ENCODE measurements at regions of chr3 and their contacts with region 1.

Region 1: DNA sequence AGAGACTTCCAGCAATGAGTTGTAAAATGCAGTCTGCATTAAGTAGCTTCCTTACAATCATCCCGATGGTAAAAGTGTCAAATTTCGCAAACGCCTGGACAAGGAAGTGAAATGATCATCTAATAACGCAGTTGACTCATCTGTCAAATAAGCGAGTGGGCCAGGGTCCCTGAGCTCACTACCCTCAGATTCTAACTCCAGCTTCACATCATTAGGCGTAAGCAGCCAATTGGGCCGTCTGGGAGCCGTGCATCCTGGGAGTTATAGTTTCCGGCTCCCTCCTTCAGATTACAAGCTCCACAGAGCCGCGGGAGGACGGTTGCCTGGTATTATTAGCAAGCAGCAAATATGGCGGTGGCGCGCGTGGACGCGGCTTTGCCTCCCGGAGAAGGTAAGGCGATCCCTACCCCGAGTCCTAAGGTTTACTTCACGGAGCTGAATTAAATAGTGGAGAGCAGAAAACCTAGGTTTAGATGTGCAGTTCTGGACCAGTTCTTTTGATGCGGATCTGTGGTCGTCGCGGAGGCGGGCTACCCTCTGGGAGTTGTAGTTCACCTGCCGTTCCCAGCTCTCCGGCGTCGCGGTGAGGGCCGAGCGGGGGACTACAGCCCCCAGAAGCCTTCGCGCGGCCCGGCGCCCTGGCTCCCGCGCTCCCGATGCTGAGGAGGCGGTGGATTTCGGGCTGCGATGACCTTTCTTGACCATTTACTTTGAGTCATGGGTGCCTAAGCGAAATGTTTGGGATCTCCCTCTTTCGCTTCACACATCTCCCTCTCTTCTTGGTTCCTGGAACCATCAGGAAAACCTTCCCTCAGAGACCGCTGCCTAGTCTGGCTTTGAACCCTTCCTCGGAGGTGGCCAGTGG is at the start of gene CEP97:
- DNase-seq: peak; percentile 70 to 90 (median 88)
- ATAC-seq: peak; percentile 98
- H3K4me3 ChIP-seq: peak within 1 kb of the TSS; percentile 91
- H3K4me3 Mint-ChIP-seq: peak within 1 kb of the TSS; percentile 88 to 100 (median 98)
- H3K27ac ChIP-seq: peak within 1 kb of the TSS; percentile 82
- H3K27ac Mint-ChIP-seq: peak within 1 kb of the TSS; percentile 91 to 98 (median 97)
- H3K4me1 ChIP-seq: peaks cover 25 to 30% of the 10 kb centered on the region in 2 donors
- H3K4me1 Mint-ChIP-seq: peaks cover 26 to 57% (median 44%) of the 10 kb centered on the region in 7 donors
- H3K27me3 ChIP-seq: no peaks in the 10 kb centered on the region
- H3K27me3 Mint-ChIP-seq: no peaks in the 10 kb centered on the region
- total RNA-seq, gene CEP97: 5.5 to 21.7 (median 10.9) TPM

Region 2: DNA sequence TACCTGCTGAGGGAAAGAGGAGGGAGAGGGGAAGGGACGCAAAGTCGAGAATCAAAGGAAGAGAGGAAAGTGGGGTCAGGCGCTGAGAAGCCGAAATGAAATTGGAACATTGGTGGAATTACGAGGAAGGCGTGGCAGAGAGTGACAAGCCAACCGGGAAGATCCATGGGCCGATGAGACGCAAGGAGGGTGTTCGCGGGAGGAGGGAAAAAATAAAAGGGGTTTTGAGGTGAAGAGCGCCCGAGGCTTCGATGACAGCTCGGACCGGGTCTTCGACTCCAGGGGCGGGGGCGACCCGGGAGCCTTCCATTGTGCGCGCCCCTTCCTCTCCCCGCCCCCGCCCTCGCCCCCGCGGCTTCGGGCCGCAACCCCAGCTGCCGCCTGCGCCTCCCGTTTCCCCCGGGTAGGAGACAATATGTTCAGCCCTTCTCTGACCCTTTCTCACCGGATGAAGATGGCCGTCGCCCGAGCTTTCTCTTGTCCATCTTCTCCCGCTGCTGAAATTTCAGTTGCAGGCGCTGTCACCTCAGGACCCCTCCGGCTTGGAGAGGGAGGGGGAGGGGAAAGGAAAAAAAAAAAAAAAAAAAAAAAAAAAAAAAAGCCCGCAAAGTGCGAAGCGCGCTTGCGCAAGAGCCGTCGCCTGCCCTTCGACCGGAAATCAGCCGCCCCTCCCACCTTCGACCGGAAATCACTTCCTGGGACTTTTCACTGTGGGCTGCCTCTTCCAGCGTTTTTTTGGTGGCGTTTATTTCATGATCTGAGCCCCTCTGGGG is 211.7 kb before region 1 on chr3 and contains the start of gene SENP7:
- CTCF ChIA-PET with region 1: no interaction called
- POLR2A ChIA-PET with region 1: no interaction called
- intact Hi-C with region 1: loop called in 1 of 2 experiments (anchors 1 kb)
- DNase-seq: peak; percentile 55 to 82 (median 76)
- ATAC-seq: peak; percentile 74
- H3K4me3 ChIP-seq: peak within 1 kb of the TSS; percentile 84
- H3K4me3 Mint-ChIP-seq: peak within 1 kb of the TSS; percentile 98 to 100 (median 100)
- H3K27ac ChIP-seq: peak within 1 kb of the TSS; percentile 92
- H3K27ac Mint-ChIP-seq: peak within 1 kb of the TSS; percentile 96 to 100 (median 98)
- H3K4me1 ChIP-seq: peaks cover 24 to 41% of the 10 kb centered on the region in 2 donors
- H3K4me1 Mint-ChIP-seq: peaks cover 35 to 79% (median 70%) of the 10 kb centered on the region in 7 donors
- H3K27me3 ChIP-seq: no peaks in the 10 kb centered on the region
- H3K27me3 Mint-ChIP-seq: peaks cover 0 to 4% (median 0%) of the 10 kb centered on the region in 5 donors
- total RNA-seq, gene SENP7: 28.8 to 79.0 (median 49.5) TPM

Region 3: GRCh38 chr3:101676765-101677435 is 47.7 kb before region 1 on chr3 and contains the start of gene ZBTB11:
- CTCF ChIA-PET with region 1: interaction called, 5 read pairs
- POLR2A ChIA-PET with region 1: interaction called, 19 read pairs
- intact Hi-C with region 1: loop called (anchors 1 kb)
- DNase-seq: peak; percentile 98 to 100 (median 99)
- ATAC-seq: peak; percentile 80
- H3K4me3 ChIP-seq: peak within 1 kb of the TSS; percentile 91
- H3K4me3 Mint-ChIP-seq: peak within 1 kb of the TSS; percentile 87 to 97 (median 93)
- H3K27ac ChIP-seq: peak within 1 kb of the TSS; percentile 98
- H3K27ac Mint-ChIP-seq: peak within 1 kb of the TSS; percentile 93 to 100 (median 97)
- H3K4me1 ChIP-seq: peaks cover 23 to 26% of the 10 kb centered on the region in 2 donors
- H3K4me1 Mint-ChIP-seq: peaks cover 19 to 63% (median 54%) of the 10 kb centered on the region in 7 donors
- H3K27me3 ChIP-seq: no peaks in the 10 kb centered on the region
- H3K27me3 Mint-ChIP-seq: no peaks in the 10 kb centered on the region
- total RNA-seq, gene ZBTB11: 31.9 to 68.2 (median 54.2) TPM

Region 4: GRCh38 chr3:101695779-101696372 is 28.7 kb before region 1 on chr3:
- CTCF ChIA-PET with region 1: interaction called, 3 read pairs
- POLR2A ChIA-PET with region 1: no interaction called
- intact Hi-C with region 1: loop called in 1 of 2 experiments (anchors 1 kb)
- DNase-seq: peak in 7 of 9 donors; percentile 30 to 65 (median 57)
- ATAC-seq: no peak
- H3K4me3 ChIP-seq: no peak overlapping the region
- H3K4me3 Mint-ChIP-seq: no peak overlapping the region
- H3K27ac ChIP-seq: no peak overlapping the region
- H3K27ac Mint-ChIP-seq: peak overlapping the region in 2 of 9 donors; percentile 8 to 45
- H3K4me1 ChIP-seq: no peaks in the 10 kb centered on the region
- H3K4me1 Mint-ChIP-seq: peaks cover 0 to 4% (median 3%) of the 10 kb centered on the region in 7 donors
- H3K27me3 ChIP-seq: no peaks in the 10 kb centered on the region
- H3K27me3 Mint-ChIP-seq: no peaks in the 10 kb centered on the region

Region 5: DNA sequence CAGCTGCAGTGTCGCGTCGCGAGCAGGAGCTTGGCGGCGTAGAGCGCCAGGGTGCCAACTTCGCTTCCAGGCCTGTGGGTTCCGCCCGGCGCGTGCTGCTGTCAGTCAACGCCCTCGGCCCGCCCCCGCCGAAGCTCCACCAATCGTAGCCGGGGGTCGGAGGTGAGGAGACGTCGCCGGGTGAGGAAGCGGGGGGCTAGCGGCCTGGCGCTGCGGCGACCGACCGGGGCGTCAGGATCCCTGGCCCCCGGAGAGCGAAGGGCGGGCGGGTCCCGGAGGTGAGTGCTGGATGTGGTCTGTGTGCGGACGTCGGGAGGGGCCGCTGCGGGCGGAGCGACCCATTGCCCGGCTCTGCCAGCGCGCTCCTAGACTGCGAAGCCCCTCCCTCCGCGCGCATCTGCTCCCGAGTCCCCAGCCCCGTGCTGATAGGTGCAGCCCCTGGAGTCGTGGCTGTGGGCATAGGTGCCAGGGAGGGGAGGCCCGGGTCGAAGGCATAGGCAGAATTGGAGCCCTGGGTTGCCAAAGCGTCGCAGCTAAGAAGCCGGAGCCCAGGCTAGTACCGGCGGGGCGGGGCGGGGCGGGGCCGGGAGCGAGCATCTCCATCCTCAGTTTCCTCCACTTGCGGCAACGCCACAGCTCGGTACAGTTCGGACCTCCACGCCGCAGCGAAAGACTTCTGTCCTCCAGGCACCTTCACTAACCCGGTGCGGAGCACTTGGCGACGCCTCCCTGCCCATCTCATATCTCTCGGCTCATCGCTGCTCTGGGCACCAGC is 54.7 kb after region 1 on chr3 and contains the start of gene NXPE3:
- CTCF ChIA-PET with region 1: no interaction called
- POLR2A ChIA-PET with region 1: interaction called, 28 read pairs
- intact Hi-C with region 1: loop called (anchors 1 kb)
- DNase-seq: peak; percentile 92 to 97 (median 94)
- ATAC-seq: peak; percentile 95
- H3K4me3 ChIP-seq: peak within 1 kb of the TSS; percentile 60
- H3K4me3 Mint-ChIP-seq: peak within 1 kb of the TSS; percentile 89 to 99 (median 94)
- H3K27ac ChIP-seq: peak within 1 kb of the TSS; percentile 88
- H3K27ac Mint-ChIP-seq: peak within 1 kb of the TSS; percentile 93 to 100 (median 99)
- H3K4me1 ChIP-seq: peaks cover 27% of the 10 kb centered on the region in 2 donors
- H3K4me1 Mint-ChIP-seq: peaks cover 20 to 61% (median 53%) of the 10 kb centered on the region in 7 donors
- H3K27me3 ChIP-seq: no peaks in the 10 kb centered on the region
- H3K27me3 Mint-ChIP-seq: no peaks in the 10 kb centered on the region
- total RNA-seq, gene NXPE3: 25.9 to 48.7 (median 35.5) TPM

Region 6: GRCh38 chr3:101803173-101803782 is 78.7 kb after region 1 on chr3:
- CTCF ChIA-PET with region 1: interaction called, 3 read pairs
- POLR2A ChIA-PET with region 1: interaction called, 3 read pairs
- intact Hi-C with region 1: loop called in 1 of 2 experiments (anchors 1 kb)
- DNase-seq: peak in 7 of 9 donors; percentile 59 to 78 (median 69)
- ATAC-seq: peak; percentile 100
- H3K4me3 ChIP-seq: no peak overlapping the region
- H3K4me3 Mint-ChIP-seq: peak overlapping the region in 6 of 10 donors; percentile 14 to 58 (median 29)
- H3K27ac ChIP-seq: peak overlapping the region; percentile 29
- H3K27ac Mint-ChIP-seq: peak overlapping the region; percentile 53 to 95 (median 68)
- H3K4me1 ChIP-seq: peaks cover 0 to 6% of the 10 kb centered on the region in 2 donors
- H3K4me1 Mint-ChIP-seq: peaks cover 10 to 67% (median 55%) of the 10 kb centered on the region in 7 donors
- H3K27me3 ChIP-seq: no peaks in the 10 kb centered on the region
- H3K27me3 Mint-ChIP-seq: no peaks in the 10 kb centered on the region

Measured in naive thymus-derived CD4-positive, alpha-beta T cell (primary cell).